ENCODE measurements at regions of chr2 and their contacts with region 1.

Region 1: GRCh38 chr2:106542811-106543259 is 55.7 kb downstream of the CD8B2 start:
- DNase-seq: no peak
- H3K4me3 ChIP-seq: no peak overlapping the region; the same call in 1 of the 2 replicates
- CTCF ChIP-seq: peak; percentile 85

Region 2: GRCh38 chr2:106552921-106553320 is 10.1 kb after region 1 on chr2:
- CTCF ChIA-PET with region 1: interaction called, 10 read pairs
- POLR2A ChIA-PET with region 1: no interaction called
- DNase-seq: no peak
- H3K4me3 ChIP-seq: no peak overlapping the region
- CTCF ChIP-seq: no peak